Activated CD4-positive, alpha-beta T cell treated with anti-CD3 and anti-CD28 coated beads, Interleukin-2, amount 10 ng/mL, durations not matched to agents 24 days and 14 days (primary cell): ENCODE measurements at regions of chr10 and their contacts with region 1.

Region 1: GRCh38 chr10:3785257-3785850 is 345 bp upstream of the KLF6 start:
- DNase-seq: peak; percentile 100
- H3K4me3 Mint-ChIP-seq: peak overlapping the region; percentile 91
- H3K27ac Mint-ChIP-seq: peak overlapping the region; percentile 99
- H3K4me1 Mint-ChIP-seq: peaks cover 48% of the 10 kb centered on the region
- H3K27me3 Mint-ChIP-seq: no peaks in the 10 kb centered on the region

Region 2: DNA sequence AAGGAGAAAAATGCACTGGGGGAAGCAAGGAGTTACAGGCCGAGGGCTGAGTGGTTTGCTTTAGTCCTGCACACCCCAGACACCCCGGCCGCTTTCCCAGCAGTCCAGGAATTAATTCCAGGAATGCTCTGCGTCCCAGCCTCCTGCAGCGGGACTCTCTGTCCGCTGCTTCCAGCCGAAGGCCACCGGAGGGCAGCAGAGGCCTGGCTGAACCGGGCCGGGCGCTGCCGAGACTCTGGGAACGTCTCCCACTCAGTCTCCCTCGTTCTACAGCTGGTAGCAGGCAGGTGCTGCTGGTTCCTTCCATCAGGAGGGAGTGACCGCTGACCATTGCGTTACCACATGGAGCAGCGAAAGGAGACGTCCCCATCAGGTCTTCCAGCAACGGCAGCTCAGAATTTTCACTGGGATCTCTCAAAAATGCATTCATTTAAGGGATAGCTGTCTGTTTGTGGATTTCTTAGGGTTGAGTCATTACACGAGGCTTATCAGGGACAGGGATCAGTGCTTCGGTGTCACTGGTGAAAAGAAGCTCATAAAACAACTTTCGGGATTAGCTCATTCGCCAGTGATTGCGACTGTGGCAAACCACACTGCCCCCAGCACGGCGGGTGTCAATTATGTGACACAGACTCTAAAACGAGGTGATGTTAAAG is 587.9 kb before region 1 on chr10:
- intact Hi-C with region 1: loop called (anchors 5 kb)
- DNase-seq: peak; percentile 91
- H3K4me3 Mint-ChIP-seq: peak overlapping the region; percentile 67
- H3K27ac Mint-ChIP-seq: peak overlapping the region; percentile 81
- H3K4me1 Mint-ChIP-seq: peaks cover 17% of the 10 kb centered on the region
- H3K27me3 Mint-ChIP-seq: peaks cover 89% of the 10 kb centered on the region

Region 3: DNA sequence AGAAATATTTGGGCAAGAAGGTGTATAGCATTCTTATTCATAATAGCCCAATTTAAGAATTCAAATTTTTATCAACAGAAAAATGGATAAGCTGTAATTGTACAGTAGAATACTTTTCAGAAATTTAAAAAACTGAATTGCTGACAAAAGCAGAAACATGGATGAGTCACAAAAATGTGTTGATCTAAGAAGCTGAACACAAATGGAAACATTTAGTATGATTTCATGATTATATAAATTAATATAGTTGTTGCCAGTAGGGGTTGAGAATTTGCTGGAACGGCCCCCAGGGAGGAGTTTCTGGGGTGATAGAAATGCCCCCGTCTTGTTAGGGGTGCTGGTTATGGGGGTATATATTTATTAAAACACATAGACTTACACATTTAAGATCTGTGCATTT is 179.5 kb before region 1 on chr10:
- intact Hi-C with region 1: loop called (anchors 5 kb)
- DNase-seq: no peak
- H3K4me3 Mint-ChIP-seq: no peak overlapping the region
- H3K27ac Mint-ChIP-seq: no peak overlapping the region
- H3K4me1 Mint-ChIP-seq: peaks cover 4% of the 10 kb centered on the region
- H3K27me3 Mint-ChIP-seq: peaks cover 16% of the 10 kb centered on the region

Region 4: GRCh38 chr10:3757638-3758490 is 27.5 kb before region 1 on chr10:
- intact Hi-C with region 1: loop called (anchors 1 kb)
- DNase-seq: peak; percentile 90
- H3K4me3 Mint-ChIP-seq: peak overlapping the region; percentile 82
- H3K27ac Mint-ChIP-seq: peak overlapping the region; percentile 100
- H3K4me1 Mint-ChIP-seq: peaks cover 71% of the 10 kb centered on the region
- H3K27me3 Mint-ChIP-seq: no peaks in the 10 kb centered on the region

Region 5: DNA sequence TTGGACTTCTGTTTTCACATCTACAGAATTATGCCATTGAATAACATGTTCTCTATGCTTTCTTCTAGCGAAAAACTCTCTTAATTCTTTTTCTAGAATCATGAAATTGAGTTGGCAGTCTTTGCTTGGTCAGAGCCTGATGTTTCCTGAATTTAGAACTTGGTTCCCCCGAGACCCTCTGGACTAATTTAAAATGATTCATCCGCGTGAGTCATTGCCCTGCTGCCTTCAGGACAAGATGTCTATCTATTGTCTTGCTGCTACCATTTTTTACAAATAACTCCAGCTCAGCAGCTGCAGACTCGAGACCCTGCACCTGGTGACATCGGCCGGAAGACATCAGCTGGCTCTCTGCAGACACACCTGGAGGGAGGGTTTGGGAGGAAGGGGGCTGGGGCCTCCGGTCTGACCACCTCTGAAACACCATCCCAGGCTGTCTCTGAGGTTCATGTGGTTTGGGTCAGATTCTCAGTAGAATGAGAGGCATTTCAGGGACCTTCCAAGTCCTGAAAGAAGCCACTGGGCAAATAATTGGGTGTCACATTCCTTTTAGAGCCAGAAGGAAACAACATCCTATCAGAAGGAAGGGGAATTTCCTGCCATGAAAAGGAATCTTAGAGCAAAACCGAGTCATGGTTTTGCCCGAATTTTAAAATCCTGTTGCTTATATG is 20.6 kb after region 1 on chr10:
- intact Hi-C with region 1: loop called (anchors 1 kb)
- DNase-seq: peak; percentile 87
- H3K4me3 Mint-ChIP-seq: peak overlapping the region; percentile 48
- H3K27ac Mint-ChIP-seq: no peak overlapping the region
- H3K4me1 Mint-ChIP-seq: peaks cover 64% of the 10 kb centered on the region
- H3K27me3 Mint-ChIP-seq: no peaks in the 10 kb centered on the region

Region 6: GRCh38 chr10:3867454-3868270 is 82.3 kb after region 1 on chr10:
- intact Hi-C with region 1: loop called (anchors 1 kb)
- DNase-seq: no peak
- H3K4me3 Mint-ChIP-seq: no peak overlapping the region
- H3K27ac Mint-ChIP-seq: peak overlapping the region; percentile 91
- H3K4me1 Mint-ChIP-seq: peaks cover 61% of the 10 kb centered on the region
- H3K27me3 Mint-ChIP-seq: no peaks in the 10 kb centered on the region

Region 7: GRCh38 chr10:4034907-4035598 is 249.7 kb after region 1 on chr10:
- intact Hi-C with region 1: loop called (anchors 5 kb)
- DNase-seq: peak; percentile 83
- H3K4me3 Mint-ChIP-seq: peak overlapping the region; percentile 73
- H3K27ac Mint-ChIP-seq: peak overlapping the region; percentile 84
- H3K4me1 Mint-ChIP-seq: peaks cover 36% of the 10 kb centered on the region
- H3K27me3 Mint-ChIP-seq: no peaks in the 10 kb centered on the region